ENCODE measurements at regions of chr16 and their contacts with region 1.

Region 1: DNA sequence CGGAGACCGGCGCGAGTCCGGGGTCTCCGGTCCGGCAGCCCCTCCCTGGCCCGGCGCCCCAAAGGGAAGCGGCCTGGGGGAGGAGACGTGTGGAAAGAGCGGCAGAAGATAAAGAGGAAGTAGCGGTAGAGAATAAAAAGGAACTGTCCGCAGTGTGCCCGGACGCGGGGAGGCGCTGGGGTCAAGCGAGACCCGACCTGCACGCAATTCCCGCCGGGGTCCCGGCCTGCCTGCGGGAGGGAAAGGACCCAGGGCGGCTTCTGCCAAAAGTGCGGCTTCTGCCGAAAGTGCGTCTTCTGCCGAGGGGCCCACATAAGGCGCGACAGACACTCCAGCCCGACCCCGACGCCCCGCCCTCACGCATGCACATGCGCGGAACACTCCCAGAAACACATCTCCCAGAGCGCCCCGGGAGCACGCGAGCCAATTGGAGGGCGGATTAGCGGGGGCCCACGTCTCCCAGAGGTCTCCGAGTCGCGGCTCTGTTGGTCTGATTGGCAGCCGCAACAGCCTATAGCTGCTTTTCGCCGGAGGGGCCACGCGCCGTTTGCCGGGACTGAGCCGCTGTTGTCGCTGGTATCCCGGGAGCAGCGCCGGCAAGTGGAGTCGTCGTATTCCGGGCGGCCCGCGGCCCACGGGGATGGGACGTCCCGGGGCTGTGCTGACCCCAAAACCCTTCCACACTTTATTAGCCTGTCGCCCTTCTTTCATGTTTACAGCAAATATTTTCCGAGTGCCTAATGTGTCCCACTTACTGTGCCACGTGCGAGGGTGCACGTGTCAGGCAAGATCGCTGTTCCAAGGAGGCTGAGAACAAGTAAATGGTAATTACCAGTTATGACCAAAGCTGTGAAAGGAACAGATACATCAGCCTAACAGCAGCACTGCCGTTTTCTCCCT is 8.0 kb upstream of the MEFV start:
- DNase-seq: peak; percentile 98
- H3K4me3 Mint-ChIP-seq: peak overlapping the region; percentile 85
- H3K27ac Mint-ChIP-seq: peak overlapping the region; percentile 88
- H3K4me1 Mint-ChIP-seq: peaks cover 30% of the 10 kb centered on the region
- H3K27me3 Mint-ChIP-seq: no peaks in the 10 kb centered on the region

Region 2: GRCh38 chr16:3173892-3174617 is 90.3 kb before region 1 on chr16:
- CTCF ChIA-PET with region 1: interaction called, 3 read pairs
- intact Hi-C with region 1: loop called (anchors 1 kb)
- DNase-seq: peak; percentile 62
- H3K4me3 Mint-ChIP-seq: peak overlapping the region; percentile 70
- H3K27ac Mint-ChIP-seq: peak overlapping the region; percentile 50
- H3K4me1 Mint-ChIP-seq: peaks cover 40% of the 10 kb centered on the region
- H3K27me3 Mint-ChIP-seq: peaks cover 57% of the 10 kb centered on the region

Region 3: GRCh38 chr16:3214904-3215600 is 49.3 kb before region 1 on chr16:
- CTCF ChIA-PET with region 1: interaction called, 6 read pairs
- intact Hi-C with region 1: loop called (anchors 1 kb)
- DNase-seq: peak; percentile 76
- H3K4me3 Mint-ChIP-seq: peak overlapping the region; percentile 54
- H3K27ac Mint-ChIP-seq: peak overlapping the region; percentile 96
- H3K4me1 Mint-ChIP-seq: peaks cover 31% of the 10 kb centered on the region
- H3K27me3 Mint-ChIP-seq: no peaks in the 10 kb centered on the region

Region 4: DNA sequence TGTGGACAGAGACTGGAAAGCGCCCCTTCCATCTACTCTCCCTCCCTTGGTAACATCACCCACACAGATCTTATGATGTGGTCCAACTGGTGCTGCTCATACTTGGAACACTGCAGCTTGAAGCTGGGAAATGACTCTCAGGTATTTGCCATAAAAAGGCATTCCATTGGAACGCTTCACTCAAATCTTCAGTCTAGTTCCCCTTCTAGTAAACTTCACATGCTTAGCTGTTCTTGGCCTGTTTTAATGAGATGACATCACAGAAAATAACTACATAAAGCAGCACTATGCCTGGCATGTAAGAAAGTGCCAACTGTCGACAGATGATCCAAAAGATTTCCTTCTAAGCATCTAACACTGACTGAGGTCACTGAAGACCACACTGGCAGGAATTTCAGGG is 28.2 kb after region 1 on chr16:
- CTCF ChIA-PET with region 1: no interaction called
- intact Hi-C with region 1: no loop called
- DNase-seq: no peak
- H3K4me3 Mint-ChIP-seq: no peak overlapping the region
- H3K27ac Mint-ChIP-seq: no peak overlapping the region
- H3K4me1 Mint-ChIP-seq: no peaks in the 10 kb centered on the region
- H3K27me3 Mint-ChIP-seq: no peaks in the 10 kb centered on the region

Region 5: GRCh38 chr16:3305109-3306068 is 41.0 kb after region 1 on chr16 and contains the starts of genes TIGD7 and ZNF75A:
- CTCF ChIA-PET with region 1: interaction called, 4 read pairs
- intact Hi-C with region 1: loop called (anchors 1 kb)
- DNase-seq: peak; percentile 84
- H3K4me3 Mint-ChIP-seq: peak within 1 kb of the TSS; percentile 79
- H3K27ac Mint-ChIP-seq: peak within 1 kb of the TSS; percentile 77
- H3K4me1 Mint-ChIP-seq: peaks cover 21% of the 10 kb centered on the region
- H3K27me3 Mint-ChIP-seq: no peaks in the 10 kb centered on the region
- total RNA-seq, gene TIGD7: 3.8 to 4.1 TPM
- total RNA-seq, gene ZNF75A: 10.5 to 12.4 TPM

Region 6: GRCh38 chr16:3400779-3401688 is 136.6 kb after region 1 on chr16 and contains the starts of genes ZNF174 and ZSCAN32:
- CTCF ChIA-PET with region 1: no interaction called
- intact Hi-C with region 1: loop called (anchors 1 kb)
- DNase-seq: peak; percentile 99
- H3K4me3 Mint-ChIP-seq: peak within 1 kb of the TSS; percentile 86
- H3K27ac Mint-ChIP-seq: peak within 1 kb of the TSS; percentile 75
- H3K4me1 Mint-ChIP-seq: peaks cover 39% of the 10 kb centered on the region
- H3K27me3 Mint-ChIP-seq: no peaks in the 10 kb centered on the region
- total RNA-seq, gene ZNF174: 5.8 to 6.3 TPM
- total RNA-seq, gene ZSCAN32: 6.5 to 7.9 TPM

Region 7: DNA sequence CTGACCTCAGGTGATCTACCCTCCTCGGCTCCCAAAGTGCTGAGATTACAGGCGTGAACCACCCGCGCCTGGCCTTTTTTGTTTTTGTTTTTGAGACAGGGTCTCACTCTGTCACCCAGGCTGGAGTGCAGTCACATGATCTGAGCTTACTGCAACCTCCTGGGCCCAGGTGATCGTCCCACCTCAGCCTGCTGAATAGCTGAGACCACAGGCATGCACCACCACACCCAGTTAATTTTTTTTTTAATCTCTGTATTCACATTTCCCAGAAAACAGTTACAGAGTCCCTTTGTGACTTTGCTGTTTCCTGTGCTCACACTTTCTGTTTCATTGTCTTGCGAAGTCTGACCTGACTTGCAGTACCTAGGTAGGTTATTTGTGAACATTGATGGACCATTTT is 239.1 kb after region 1 on chr16:
- CTCF ChIA-PET with region 1: no interaction called
- intact Hi-C with region 1: loop called (anchors 1 kb)
- DNase-seq: peak; percentile 73
- H3K4me3 Mint-ChIP-seq: peak overlapping the region; percentile 88
- H3K27ac Mint-ChIP-seq: peak overlapping the region; percentile 89
- H3K4me1 Mint-ChIP-seq: peaks cover 68% of the 10 kb centered on the region
- H3K27me3 Mint-ChIP-seq: no peaks in the 10 kb centered on the region

Region 8: DNA sequence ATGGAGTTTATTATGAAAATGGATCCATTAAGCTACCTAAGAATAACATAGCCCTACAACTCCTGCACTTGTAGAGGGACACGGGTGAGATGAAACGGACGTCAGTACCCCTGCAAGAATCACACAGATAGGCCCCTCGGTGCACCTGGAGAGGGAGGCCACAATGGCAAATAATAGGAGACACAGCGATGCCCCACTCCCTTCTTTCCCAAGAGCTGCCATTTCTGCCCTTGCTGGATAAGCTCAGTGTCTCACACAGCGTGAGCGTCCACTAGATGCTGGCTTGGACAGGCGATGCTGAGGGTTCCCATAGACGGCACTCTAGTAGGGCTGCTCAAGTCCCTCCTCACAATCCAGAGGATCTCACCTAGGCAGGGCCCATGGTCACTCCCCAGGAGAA is 784.1 kb after region 1 on chr16:
- CTCF ChIA-PET with region 1: no interaction called
- intact Hi-C with region 1: no loop called
- DNase-seq: no peak
- H3K4me3 Mint-ChIP-seq: no peak overlapping the region
- H3K27ac Mint-ChIP-seq: peak overlapping the region; percentile 12
- H3K4me1 Mint-ChIP-seq: peaks cover 12% of the 10 kb centered on the region
- H3K27me3 Mint-ChIP-seq: peaks cover 7% of the 10 kb centered on the region